ENCODE measurements at regions of chr13 and their contacts with region 1.

Region 1: DNA sequence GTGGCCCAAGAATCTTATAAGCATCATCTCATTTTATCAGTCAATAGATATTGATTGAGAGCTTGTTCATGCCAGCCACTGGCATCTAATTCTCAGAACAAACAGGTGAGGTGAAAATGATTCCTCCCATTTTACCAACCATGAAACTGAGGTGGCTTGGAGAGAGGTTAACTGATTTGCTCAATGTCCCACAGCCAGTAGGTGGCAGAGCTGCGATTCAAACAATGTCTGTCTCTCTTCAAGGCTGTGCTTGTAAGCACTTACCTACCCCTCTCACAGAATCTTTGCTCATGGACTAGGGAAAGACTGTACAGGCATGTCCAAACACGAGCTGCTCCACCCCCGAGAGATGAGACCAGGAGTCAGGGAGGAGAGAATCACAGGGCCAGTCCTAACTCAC is 21.5 kb upstream of the GSX1 start:
- DNase-seq: peak; percentile 60 to 70
- H3K4me3 ChIP-seq: no peak overlapping the region
- H3K4me3 Mint-ChIP-seq: no peak overlapping the region
- H3K27ac Mint-ChIP-seq: no peak overlapping the region
- H3K4me1 ChIP-seq: no peaks in the 10 kb centered on the region
- H3K4me1 Mint-ChIP-seq: peaks cover 7% of the 10 kb centered on the region
- H3K27me3 ChIP-seq: no peaks in the 10 kb centered on the region
- H3K27me3 Mint-ChIP-seq: peaks cover 2% of the 10 kb centered on the region
- CTCF ChIP-seq: peak; percentile 69 to 85

Region 2: DNA sequence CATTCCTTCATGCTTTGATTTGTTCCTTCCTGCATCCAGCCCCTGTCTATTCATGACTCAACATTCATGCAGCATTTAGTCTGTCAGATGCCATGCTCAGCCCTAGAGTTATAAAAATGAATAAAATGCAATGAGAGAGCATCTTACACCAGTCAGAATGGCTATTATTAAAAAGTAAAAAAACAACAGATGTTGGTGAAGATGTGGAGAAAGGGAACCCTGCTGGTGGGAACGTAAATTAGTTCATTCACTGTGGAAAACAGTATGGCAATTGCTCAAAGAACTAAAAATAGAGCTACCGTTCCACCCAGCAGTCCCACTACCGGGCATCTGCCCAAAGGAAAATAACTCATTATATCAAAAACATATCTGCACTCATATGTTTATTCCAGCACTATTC is 416.4 kb before region 1 on chr13:
- CTCF ChIA-PET with region 1: no interaction called
- POLR2A ChIA-PET with region 1: no interaction called
- intact Hi-C with region 1: no loop called
- DNase-seq: no peak
- H3K4me3 ChIP-seq: no peak overlapping the region
- H3K4me3 Mint-ChIP-seq: no peak overlapping the region
- H3K27ac Mint-ChIP-seq: no peak overlapping the region
- H3K4me1 ChIP-seq: peaks cover 19% of the 10 kb centered on the region
- H3K4me1 Mint-ChIP-seq: peaks cover 17% of the 10 kb centered on the region
- H3K27me3 ChIP-seq: no peaks in the 10 kb centered on the region; the same call in 1 of the 2 replicates
- H3K27me3 Mint-ChIP-seq: no peaks in the 10 kb centered on the region
- CTCF ChIP-seq: no peak

Region 3: GRCh38 chr13:27481766-27482165 is 289.0 kb before region 1 on chr13:
- CTCF ChIA-PET with region 1: no interaction called
- POLR2A ChIA-PET with region 1: no interaction called
- intact Hi-C with region 1: loop called (anchors 10 kb)
- DNase-seq: peak; percentile 65 to 70
- H3K4me3 ChIP-seq: no peak overlapping the region
- H3K4me3 Mint-ChIP-seq: no peak overlapping the region
- H3K27ac Mint-ChIP-seq: no peak overlapping the region
- H3K4me1 ChIP-seq: peaks cover 9% of the 10 kb centered on the region
- H3K4me1 Mint-ChIP-seq: peaks cover 9% of the 10 kb centered on the region
- H3K27me3 ChIP-seq: no peaks in the 10 kb centered on the region
- H3K27me3 Mint-ChIP-seq: no peaks in the 10 kb centered on the region
- CTCF ChIP-seq: peak; percentile 65 to 76

Region 4: GRCh38 chr13:27783111-27783510 is 12.3 kb after region 1 on chr13:
- CTCF ChIA-PET with region 1: interaction called, 10 read pairs
- POLR2A ChIA-PET with region 1: no interaction called
- intact Hi-C with region 1: no loop called
- DNase-seq: peak in 1 of 2 experiments; percentile 32
- H3K4me3 ChIP-seq: no peak overlapping the region
- H3K4me3 Mint-ChIP-seq: no peak overlapping the region
- H3K27ac Mint-ChIP-seq: no peak overlapping the region
- H3K4me1 ChIP-seq: peaks cover 5% of the 10 kb centered on the region; the same call in 1 of the 2 replicates
- H3K4me1 Mint-ChIP-seq: peaks cover 6% of the 10 kb centered on the region
- H3K27me3 ChIP-seq: no peaks in the 10 kb centered on the region
- H3K27me3 Mint-ChIP-seq: peaks cover 15% of the 10 kb centered on the region
- CTCF ChIP-seq: peak; percentile 23 to 41